GM10248 (cell line): ENCODE measurements at regions of chr13 and their contacts with region 1.

Region 1: GRCh38 chr13:52968074-52968700 is 60.4 kb upstream of the OLFM4 start:
- DNase-seq: peak; percentile 76
- CTCF ChIP-seq: peak; percentile 87

Region 2: DNA sequence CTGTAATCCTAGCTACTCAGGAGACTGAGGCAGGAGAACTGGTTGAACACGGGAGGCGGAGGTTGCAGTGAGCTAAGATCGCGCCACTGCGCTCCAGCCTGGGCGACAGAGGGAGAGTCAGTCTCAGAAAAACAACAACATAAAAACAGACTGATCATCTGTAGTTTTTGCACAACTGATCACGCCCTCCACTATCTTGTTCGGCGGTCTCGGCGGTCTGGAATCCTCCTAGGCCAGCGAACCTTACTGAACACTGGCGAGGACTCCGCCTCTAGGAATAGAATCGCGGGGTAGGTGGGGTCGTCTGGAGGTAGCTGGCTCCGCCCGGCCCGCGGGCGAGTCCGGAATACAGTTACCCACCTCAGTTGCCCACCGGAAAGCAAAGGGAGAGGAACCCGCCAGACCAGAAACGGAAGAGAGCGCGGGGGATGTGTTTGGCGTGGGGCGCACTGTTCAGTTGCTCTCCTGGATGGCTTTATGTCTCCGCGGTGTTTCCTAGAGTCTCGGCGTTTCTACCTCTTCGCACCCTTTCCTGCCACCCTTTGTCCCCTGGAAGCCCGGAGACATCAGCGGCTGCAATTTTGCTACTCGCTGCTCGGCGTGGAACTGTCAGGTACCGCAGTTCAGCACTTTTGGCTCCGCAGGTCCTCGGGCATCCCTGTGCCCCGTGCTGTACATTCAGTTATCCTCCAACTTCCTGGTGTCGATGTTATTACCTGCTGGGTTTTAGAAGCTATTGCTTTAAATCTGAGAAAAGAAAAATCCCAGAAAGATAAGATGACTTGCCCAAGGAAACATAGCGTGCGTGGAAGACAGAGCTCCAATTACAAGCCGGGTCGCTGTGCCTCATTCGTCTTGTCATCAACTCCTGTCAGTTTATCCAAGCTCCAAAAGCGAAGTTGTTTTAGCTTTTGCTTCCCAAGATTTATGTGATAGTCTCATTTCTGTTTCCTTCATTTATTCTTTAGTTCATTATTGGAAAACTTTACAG is 350.8 kb before region 1 on chr13:
- CTCF ChIA-PET with region 1: interaction called, 13 read pairs
- POLR2A ChIA-PET with region 1: no interaction called
- DNase-seq: peak; percentile 86
- CTCF ChIP-seq: no peak

Region 3: GRCh38 chr13:52665325-52665724 is 302.9 kb before region 1 on chr13:
- CTCF ChIA-PET with region 1: interaction called, 13 read pairs
- POLR2A ChIA-PET with region 1: no interaction called
- DNase-seq: peak; percentile 20
- CTCF ChIP-seq: peak; percentile 37

Region 4: DNA sequence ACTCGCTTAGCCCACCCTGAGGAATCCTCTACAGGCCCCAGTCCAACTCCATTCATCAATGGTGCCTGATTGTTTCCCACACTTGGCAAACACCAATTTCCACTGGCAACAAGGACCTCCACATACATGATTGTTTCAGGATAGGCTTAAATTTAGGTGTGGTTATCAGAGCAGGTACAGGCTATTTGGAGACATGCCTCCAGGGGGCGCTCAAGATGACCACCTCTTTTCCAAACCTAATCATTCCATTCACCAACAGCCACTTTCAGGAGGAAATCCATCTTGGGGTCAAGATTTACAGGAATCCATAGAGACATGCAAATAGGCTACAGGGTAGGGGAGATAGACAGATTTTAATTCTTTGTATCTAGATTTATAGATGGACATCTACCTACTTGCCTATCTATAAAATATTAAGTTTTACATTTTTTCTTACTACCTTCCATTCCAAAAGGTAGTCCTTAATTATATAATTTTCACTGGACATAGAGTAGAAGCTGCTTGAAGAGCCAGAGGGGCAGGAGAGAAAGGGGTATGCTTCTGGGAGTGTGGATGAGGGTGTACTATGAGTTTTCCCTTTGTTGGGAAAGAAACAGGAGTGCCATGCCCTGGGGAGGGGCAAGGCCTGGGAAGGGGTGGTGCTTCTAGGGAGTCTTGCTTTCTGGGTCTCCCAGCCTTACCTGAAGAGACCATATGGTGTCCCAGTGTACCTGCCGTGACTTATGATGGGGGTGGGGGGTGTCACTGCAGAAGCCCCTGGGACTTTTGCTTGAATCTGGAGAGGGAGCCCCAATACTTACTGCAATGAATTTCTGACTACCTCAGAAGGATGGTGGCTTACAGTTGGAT is 105.6 kb before region 1 on chr13:
- CTCF ChIA-PET with region 1: interaction called, 16 read pairs
- POLR2A ChIA-PET with region 1: no interaction called
- DNase-seq: peak; percentile 43
- CTCF ChIP-seq: peak; percentile 33

Region 5: GRCh38 chr13:52892925-52893324 is 75.3 kb before region 1 on chr13:
- CTCF ChIA-PET with region 1: interaction called, 13 read pairs
- POLR2A ChIA-PET with region 1: no interaction called
- DNase-seq: no peak
- CTCF ChIP-seq: no peak

Region 6: DNA sequence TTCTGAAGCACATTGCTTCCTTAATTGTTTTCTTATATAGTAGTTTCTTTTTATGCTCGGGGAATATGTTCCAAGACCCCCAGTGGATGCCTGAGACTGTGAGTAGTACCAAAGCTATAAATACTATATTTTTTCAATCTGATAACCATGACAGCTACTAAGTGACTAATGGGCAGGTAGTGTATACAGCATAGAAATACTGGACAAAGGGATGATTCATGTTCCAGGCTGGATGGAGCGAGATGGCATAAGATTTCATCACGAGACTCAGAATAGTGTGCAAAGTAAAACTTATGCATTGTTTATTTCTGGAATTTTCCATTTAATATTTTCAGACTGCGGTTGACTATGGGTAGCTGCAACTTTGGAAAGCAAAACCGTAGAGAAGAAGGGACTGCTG is 12.5 kb after region 1 on chr13:
- CTCF ChIA-PET with region 1: interaction called, 36 read pairs
- POLR2A ChIA-PET with region 1: no interaction called
- DNase-seq: no peak
- CTCF ChIP-seq: no peak